ENCODE measurements at regions of chr14 and their contacts with region 1.

Region 1: DNA sequence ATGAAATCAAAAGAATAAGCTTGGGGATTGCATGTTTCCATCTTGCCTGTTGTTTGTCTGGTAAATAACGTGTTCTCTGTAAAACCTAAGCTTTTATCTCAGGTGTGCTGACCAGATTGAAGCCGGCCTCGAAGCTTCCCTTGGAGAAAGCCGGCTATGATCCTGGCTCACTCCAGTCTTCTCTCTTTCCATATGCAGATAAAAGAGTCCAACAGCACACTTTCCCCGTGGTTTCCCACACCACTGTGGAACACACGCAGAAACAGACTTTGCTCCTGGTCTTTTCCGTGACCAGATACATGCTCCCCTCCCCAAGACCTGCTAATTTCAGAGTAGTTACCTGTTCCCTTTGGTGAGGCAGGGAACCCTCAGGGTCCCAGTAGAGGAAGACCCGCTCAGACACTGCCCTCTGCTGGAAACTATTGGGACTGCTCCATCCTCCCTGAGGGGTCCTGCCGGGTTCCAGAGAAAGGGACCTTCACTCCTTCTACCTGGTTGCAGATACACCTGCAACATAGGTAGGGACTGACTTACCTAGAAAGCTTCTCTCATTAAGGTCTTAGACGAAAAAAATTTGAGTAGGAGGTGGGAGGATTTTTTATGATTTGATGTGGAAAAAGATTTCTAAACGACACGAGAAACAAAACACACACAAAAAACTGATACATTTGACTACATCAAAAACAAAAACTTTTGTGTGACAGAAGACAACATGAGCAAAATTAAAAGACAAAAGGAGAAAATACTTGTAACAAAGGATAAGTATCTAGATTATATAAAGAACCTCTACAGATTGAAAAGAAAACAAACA is 415.5 kb upstream of the CCDC196 start:
- DNase-seq: peak; percentile 73
- H3K4me3 Mint-ChIP-seq: no peak overlapping the region
- H3K27ac Mint-ChIP-seq: no peak overlapping the region
- H3K4me1 Mint-ChIP-seq: no peaks in the 10 kb centered on the region
- H3K27me3 Mint-ChIP-seq: no peaks in the 10 kb centered on the region

Region 2: GRCh38 chr14:65195042-65195719 is 875.5 kb before region 1 on chr14:
- CTCF ChIA-PET with region 1: no interaction called
- intact Hi-C with region 1: no loop called
- DNase-seq: no peak
- H3K4me3 Mint-ChIP-seq: no peak overlapping the region
- H3K27ac Mint-ChIP-seq: no peak overlapping the region
- H3K4me1 Mint-ChIP-seq: peaks cover 3% of the 10 kb centered on the region
- H3K27me3 Mint-ChIP-seq: no peaks in the 10 kb centered on the region

Region 3: GRCh38 chr14:66056926-66057552 is 13.7 kb before region 1 on chr14:
- CTCF ChIA-PET with region 1: interaction called, 20 read pairs
- intact Hi-C with region 1: no loop called
- DNase-seq: no peak
- H3K4me3 Mint-ChIP-seq: no peak overlapping the region
- H3K27ac Mint-ChIP-seq: no peak overlapping the region
- H3K4me1 Mint-ChIP-seq: peaks cover 13% of the 10 kb centered on the region
- H3K27me3 Mint-ChIP-seq: no peaks in the 10 kb centered on the region